K562 (cell line): ENCODE measurements at regions of chr16 and their contacts with region 1.

Region 1: GRCh38 chr16:87316923-87317749 is at the start of gene C16orf95:
- DNase-seq: peak; percentile 98 to 100 (median 100)
- ATAC-seq: peak; percentile 95
- H3K4me3 ChIP-seq: peak within 1 kb of the TSS; percentile 79
- H3K27ac ChIP-seq: peak within 1 kb of the TSS; percentile 93
- H3K4me1 ChIP-seq: peaks cover 6 to 13% of the 10 kb centered on the region in 2 experiments
- H3K27me3 ChIP-seq: no peaks in the 10 kb centered on the region
- CTCF ChIP-seq: peak; percentile 81 to 84 (median 82)
- EP300 ChIP-seq: no peak
- POLR2A ChIP-seq: peak; percentile 97
- RAD21 ChIP-seq: peak; percentile 46 to 69
- polyA plus RNA-seq, gene C16orf95: 13.7 to 15.3 TPM

Region 2: GRCh38 chr16:87305505-87306391 is 11.4 kb before region 1 on chr16:
- CTCF ChIA-PET with region 1: no interaction called
- POLR2A ChIA-PET with region 1: interaction called, 42 read pairs
- in situ Hi-C with region 1: no loop called
- intact Hi-C with region 1: no loop called
- DNase-seq: peak; percentile 85 to 87 (median 87)
- ATAC-seq: peak; percentile 91
- H3K4me3 ChIP-seq: peak overlapping the region; percentile 44
- H3K27ac ChIP-seq: peak overlapping the region; percentile 84
- H3K4me1 ChIP-seq: peaks cover 39 to 40% of the 10 kb centered on the region in 2 experiments
- H3K27me3 ChIP-seq: no peaks in the 10 kb centered on the region
- CTCF ChIP-seq: peak; percentile 64 to 67 (median 66)
- EP300 ChIP-seq: peak; percentile 51; the same call in 1 of the 2 replicates
- POLR2A ChIP-seq: peak; percentile 82
- RAD21 ChIP-seq: no peak

Region 3: DNA sequence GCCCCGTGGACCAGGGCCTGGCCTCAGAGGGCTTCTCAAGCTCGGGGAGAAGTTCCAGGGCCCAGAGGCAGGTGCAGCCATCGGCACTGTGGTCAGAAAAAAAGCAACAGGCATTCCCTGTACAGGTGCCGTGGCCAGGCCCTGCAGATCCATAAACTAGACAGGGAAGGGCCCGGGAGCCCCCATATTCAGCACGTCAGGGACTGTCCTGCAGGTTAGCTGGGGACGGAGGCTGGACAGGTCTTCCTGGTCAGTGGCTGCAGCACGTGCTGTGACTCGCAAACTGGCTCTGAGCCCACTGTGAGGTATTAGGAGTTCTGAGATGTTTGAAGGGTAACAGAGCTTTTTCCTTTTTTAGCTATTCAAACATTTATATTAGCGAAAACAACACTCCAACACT is 15.0 kb after region 1 on chr16:
- CTCF ChIA-PET with region 1: no interaction called
- POLR2A ChIA-PET with region 1: interaction called, 15 read pairs
- in situ Hi-C with region 1: no loop called
- intact Hi-C with region 1: no loop called
- DNase-seq: no peak
- ATAC-seq: no peak
- H3K4me3 ChIP-seq: no peak overlapping the region
- H3K27ac ChIP-seq: no peak overlapping the region
- H3K4me1 ChIP-seq: peaks cover 0 to 3% of the 10 kb centered on the region in 2 experiments; a peak in 1 of 5 replicates
- H3K27me3 ChIP-seq: no peaks in the 10 kb centered on the region
- CTCF ChIP-seq: no peak
- EP300 ChIP-seq: no peak
- POLR2A ChIP-seq: no peak
- RAD21 ChIP-seq: no peak

Region 4: DNA sequence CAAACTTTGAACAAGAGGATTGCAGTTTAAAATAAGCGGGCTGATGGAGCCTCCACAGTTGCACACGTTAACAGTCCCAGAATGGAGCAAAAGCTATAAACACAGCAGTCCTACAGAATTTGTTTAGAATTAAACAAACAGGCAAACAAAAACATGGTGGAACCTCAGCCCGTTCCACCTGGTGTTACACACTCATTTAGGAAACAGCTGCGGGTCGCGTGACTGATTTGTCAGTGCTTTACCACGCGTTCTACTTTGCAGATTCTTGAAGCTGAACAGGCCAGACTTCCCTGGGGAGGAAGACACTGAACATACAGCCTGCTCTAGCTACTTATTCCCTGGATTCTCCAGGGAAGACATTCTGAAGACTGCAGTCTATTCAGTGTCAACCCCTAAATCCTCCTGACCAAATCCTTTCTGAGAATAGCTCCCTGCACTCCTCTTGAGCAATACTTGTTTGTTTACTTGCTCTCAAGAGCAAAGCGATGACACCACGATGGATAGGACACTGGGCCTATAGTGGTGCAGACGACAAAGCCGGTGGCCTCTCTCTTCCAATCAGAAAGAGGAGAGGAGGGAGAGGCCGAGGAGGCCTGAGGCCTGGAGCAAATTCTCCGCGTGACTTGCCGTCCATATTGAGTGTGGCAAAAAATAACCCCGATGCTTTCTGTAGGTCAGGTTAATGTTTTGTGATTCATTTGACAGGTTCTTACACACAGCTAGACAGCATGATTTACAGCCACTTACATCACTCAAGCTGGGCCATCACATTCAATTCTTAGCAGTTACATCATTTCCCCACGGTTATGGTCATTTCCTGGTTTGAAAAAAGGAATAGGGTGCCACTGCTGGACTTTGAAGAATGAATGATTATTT is 71.0 kb after region 1 on chr16:
- CTCF ChIA-PET with region 1: no interaction called
- POLR2A ChIA-PET with region 1: interaction called, 5 read pairs
- in situ Hi-C with region 1: no loop called
- intact Hi-C with region 1: loop called (anchors 2 kb)
- DNase-seq: peak; percentile 83 to 98 (median 92)
- ATAC-seq: peak; percentile 84
- H3K4me3 ChIP-seq: no peak overlapping the region
- H3K27ac ChIP-seq: peak overlapping the region; percentile 97
- H3K4me1 ChIP-seq: peaks cover 28 to 40% of the 10 kb centered on the region in 2 experiments; a peak in 4 of 5 replicates
- H3K27me3 ChIP-seq: no peaks in the 10 kb centered on the region
- CTCF ChIP-seq: no peak
- EP300 ChIP-seq: peak; percentile 93
- POLR2A ChIP-seq: peak; percentile 74
- RAD21 ChIP-seq: no peak